ENCODE measurements at regions of chr1 and their contacts with region 1.

Region 1: DNA sequence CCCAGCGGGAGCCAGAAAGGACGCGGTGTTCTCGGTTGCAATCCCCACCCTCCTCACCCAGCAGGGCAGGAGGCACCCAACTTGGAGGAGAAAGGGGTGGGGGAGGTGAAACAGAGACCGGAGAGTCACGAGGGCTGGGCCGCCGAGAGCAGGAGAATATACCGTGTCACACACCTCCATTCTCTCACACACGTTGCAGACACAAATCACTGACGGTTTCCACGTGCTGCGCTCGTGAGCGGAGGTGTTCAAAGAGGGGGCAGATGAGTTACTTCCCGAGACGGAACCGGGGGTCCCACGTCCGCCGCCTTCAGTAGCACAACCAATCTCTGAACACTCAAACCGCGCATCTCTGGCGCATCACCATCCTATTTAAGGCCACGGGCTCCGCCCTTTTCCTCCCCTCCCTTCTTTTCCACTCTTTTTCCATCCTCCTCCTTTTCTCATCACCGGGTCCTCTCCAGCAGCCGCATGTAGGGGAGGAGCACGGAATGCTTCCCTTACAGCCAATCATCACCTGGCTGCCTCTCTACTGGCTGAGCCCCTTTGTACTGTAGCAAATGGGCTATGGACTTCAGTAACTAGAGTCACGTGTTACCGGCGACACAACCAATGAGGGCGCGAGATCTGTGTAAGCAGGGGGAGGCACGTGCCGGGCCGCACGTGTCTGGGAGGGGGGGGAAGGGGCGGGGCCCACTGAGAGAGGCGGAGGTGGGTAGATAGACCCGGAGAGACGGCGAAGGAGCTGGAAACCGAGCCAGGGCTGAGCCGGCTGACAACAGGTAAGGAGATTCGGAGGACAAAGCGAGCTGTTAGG is at the start of gene CIART:
- DNase-seq: peak; percentile 69
- H3K4me3 Mint-ChIP-seq: peak within 1 kb of the TSS; percentile 87
- H3K27ac Mint-ChIP-seq: peak within 1 kb of the TSS; percentile 80
- H3K4me1 Mint-ChIP-seq: peaks cover 38% of the 10 kb centered on the region
- H3K27me3 Mint-ChIP-seq: peaks cover 4% of the 10 kb centered on the region
- total RNA-seq, gene CIART: 3.4 TPM in 2 replicates

Region 2: GRCh38 chr1:150072959-150073358 is 209.1 kb before region 1 on chr1:
- intact Hi-C with region 1: no loop called
- DNase-seq: no peak
- H3K4me3 Mint-ChIP-seq: no peak overlapping the region
- H3K27ac Mint-ChIP-seq: no peak overlapping the region
- H3K4me1 Mint-ChIP-seq: peaks cover 20% of the 10 kb centered on the region
- H3K27me3 Mint-ChIP-seq: no peaks in the 10 kb centered on the region

Region 3: GRCh38 chr1:150293433-150294168 is 11.6 kb after region 1 on chr1 and contains the start of gene MRPS21:
- intact Hi-C with region 1: loop called (anchors 1 kb)
- DNase-seq: peak; percentile 85
- H3K4me3 Mint-ChIP-seq: peak within 1 kb of the TSS; percentile 93
- H3K27ac Mint-ChIP-seq: peak within 1 kb of the TSS; percentile 98
- H3K4me1 Mint-ChIP-seq: peaks cover 24% of the 10 kb centered on the region
- H3K27me3 Mint-ChIP-seq: no peaks in the 10 kb centered on the region
- total RNA-seq, gene MRPS21: 81.4 and 85.2 TPM in 2 replicates